ENCODE measurements at regions of chr10 and their contacts with region 1.

Region 1: GRCh38 chr10:58952747-58953466 is 223.5 kb upstream of the PHYHIPL start:
- DNase-seq: no peak
- ATAC-seq: peak; percentile 85
- H3K4me3 ChIP-seq: no peak overlapping the region
- H3K27ac ChIP-seq: no peak overlapping the region
- H3K4me1 ChIP-seq: no peaks in the 10 kb centered on the region
- H3K27me3 ChIP-seq: no peaks in the 10 kb centered on the region

Region 2: DNA sequence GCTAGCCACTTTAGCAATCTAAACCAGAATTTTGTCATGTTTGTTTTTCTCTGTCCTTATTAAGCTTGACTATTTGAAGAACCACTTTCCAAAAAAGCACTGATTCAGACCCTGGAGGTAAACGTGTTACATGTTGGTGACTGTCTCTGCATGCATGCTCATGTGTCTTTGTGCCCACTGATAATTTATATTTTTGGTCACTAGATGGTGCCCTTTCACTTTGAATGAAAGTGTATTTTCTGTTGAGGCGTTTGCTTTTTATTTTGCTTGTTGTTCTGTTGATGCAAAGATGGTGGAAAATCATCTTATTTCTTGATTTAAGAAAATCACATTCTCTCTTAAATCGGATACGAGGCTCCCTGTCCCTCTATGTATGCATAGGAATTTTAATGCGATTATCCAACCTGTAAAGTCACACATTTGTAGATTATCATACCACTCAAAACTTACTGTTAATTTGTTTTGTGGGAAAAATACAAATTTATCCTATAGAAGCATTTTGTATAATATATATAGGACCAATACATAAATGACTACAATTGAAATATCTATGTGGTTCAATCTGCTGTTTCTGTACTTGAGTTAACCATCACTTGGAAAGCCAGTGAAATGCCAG is 170.9 kb before region 1 on chr10:
- intact Hi-C with region 1: loop called in 1 of 2 experiments (anchors 10 kb)
- DNase-seq: no peak
- ATAC-seq: peak; percentile 54
- H3K4me3 ChIP-seq: no peak overlapping the region
- H3K27ac ChIP-seq: no peak overlapping the region
- H3K4me1 ChIP-seq: no peaks in the 10 kb centered on the region
- H3K27me3 ChIP-seq: no peaks in the 10 kb centered on the region

Region 3: GRCh38 chr10:58867683-58868082 is 85.2 kb before region 1 on chr10:
- intact Hi-C with region 1: no loop called
- DNase-seq: no peak
- ATAC-seq: no peak
- H3K4me3 ChIP-seq: no peak overlapping the region
- H3K27ac ChIP-seq: no peak overlapping the region
- H3K4me1 ChIP-seq: no peaks in the 10 kb centered on the region
- H3K27me3 ChIP-seq: no peaks in the 10 kb centered on the region

Region 4: GRCh38 chr10:58919927-58920654 is 32.8 kb before region 1 on chr10:
- intact Hi-C with region 1: no loop called
- DNase-seq: no peak
- ATAC-seq: no peak
- H3K4me3 ChIP-seq: no peak overlapping the region
- H3K27ac ChIP-seq: no peak overlapping the region
- H3K4me1 ChIP-seq: no peaks in the 10 kb centered on the region
- H3K27me3 ChIP-seq: no peaks in the 10 kb centered on the region

Region 5: GRCh38 chr10:59079386-59080226 is 126.7 kb after region 1 on chr10:
- intact Hi-C with region 1: loop called (anchors 10 kb)
- DNase-seq: no peak
- ATAC-seq: peak; percentile 83
- H3K4me3 ChIP-seq: no peak overlapping the region
- H3K27ac ChIP-seq: peak overlapping the region; percentile 99
- H3K4me1 ChIP-seq: peaks cover 12 to 15% of the 10 kb centered on the region in 2 donors
- H3K27me3 ChIP-seq: no peaks in the 10 kb centered on the region

Region 6: DNA sequence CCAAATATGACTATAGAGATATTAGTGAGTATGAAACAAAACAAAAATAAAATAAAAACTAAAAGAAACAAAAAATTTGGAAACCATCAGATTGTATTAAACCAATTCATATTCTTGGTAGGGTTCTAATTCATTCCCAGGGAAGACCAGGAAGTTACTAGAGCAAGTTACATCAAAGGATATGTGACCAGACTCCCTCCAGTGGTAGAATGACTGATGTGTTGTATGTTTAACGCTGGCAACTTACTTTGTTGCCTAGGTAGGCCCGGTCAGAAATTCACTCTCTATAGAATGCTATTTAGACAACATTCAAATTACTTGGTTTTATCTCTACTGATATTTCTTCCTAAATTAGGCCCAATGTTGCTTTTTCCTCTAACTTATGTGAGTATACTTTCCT is 228.8 kb after region 1 on chr10:
- intact Hi-C with region 1: loop called (anchors 5 kb)
- DNase-seq: no peak
- ATAC-seq: no peak
- H3K4me3 ChIP-seq: no peak overlapping the region
- H3K27ac ChIP-seq: no peak overlapping the region
- H3K4me1 ChIP-seq: peaks cover 0 to 1% of the 10 kb centered on the region in 2 donors
- H3K27me3 ChIP-seq: no peaks in the 10 kb centered on the region

Region 7: GRCh38 chr10:59234816-59235429 is 282.0 kb after region 1 on chr10:
- intact Hi-C with region 1: loop called (anchors 2 to 5 kb)
- DNase-seq: no peak
- ATAC-seq: no peak
- H3K4me3 ChIP-seq: no peak overlapping the region
- H3K27ac ChIP-seq: no peak overlapping the region
- H3K4me1 ChIP-seq: no peaks in the 10 kb centered on the region
- H3K27me3 ChIP-seq: no peaks in the 10 kb centered on the region

Region 8: GRCh38 chr10:59240582-59241183 is 287.8 kb after region 1 on chr10:
- intact Hi-C with region 1: loop called (anchors 2 to 5 kb)
- DNase-seq: no peak
- ATAC-seq: no peak
- H3K4me3 ChIP-seq: no peak overlapping the region
- H3K27ac ChIP-seq: no peak overlapping the region
- H3K4me1 ChIP-seq: no peaks in the 10 kb centered on the region
- H3K27me3 ChIP-seq: no peaks in the 10 kb centered on the region

Region 9: GRCh38 chr10:59580026-59580863 is 627.3 kb after region 1 on chr10:
- intact Hi-C with region 1: loop called (anchors 10 kb)
- DNase-seq: no peak
- ATAC-seq: no peak
- H3K4me3 ChIP-seq: no peak overlapping the region
- H3K27ac ChIP-seq: no peak overlapping the region
- H3K4me1 ChIP-seq: no peaks in the 10 kb centered on the region
- H3K27me3 ChIP-seq: no peaks in the 10 kb centered on the region

Measured in aorta (tissue), 5 donors.